AG04449 (cell line): ENCODE measurements at regions of chr7 and their contacts with region 1.

Region 1: DNA sequence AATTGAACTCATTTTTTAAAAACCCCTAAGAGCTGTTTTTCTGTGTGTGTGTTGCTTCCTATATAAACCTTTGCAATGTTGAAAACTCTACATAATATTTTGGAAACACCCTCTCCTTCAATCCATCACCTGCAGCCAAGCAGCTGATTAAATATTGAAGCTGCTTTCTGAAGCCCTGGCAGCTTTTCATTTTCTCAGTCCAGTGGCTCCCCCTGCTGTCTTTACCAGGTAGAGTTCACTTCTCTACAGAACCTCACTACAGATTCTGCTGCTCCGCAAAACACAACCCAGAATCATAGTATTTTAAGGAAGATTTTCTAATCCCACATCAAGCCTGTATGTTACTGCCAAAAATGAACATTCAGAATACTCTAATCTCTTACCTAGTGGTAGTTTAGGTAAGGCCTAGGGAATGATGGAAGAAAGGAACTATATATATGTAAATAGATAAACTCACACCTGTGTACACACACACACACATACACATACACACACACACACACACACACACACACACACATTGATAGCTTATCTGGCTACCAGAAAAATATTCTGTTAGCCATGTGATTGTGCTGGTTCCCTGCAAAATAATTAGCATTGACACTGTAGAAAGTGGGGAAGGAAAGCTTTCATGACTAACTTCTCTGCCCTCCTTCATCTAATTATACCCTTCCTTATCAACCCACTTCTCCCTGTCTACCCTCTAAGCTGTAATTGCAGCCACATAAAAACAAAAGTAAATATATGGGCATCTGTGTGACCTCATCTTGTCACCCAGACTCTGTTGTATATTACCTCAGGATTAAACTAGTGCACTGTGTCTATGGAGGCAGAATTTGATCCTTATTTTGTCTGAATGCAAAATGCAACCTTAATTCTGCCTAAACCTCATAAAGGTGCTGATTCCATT is 229.5 kb upstream of the FZD1 start:
- DNase-seq: no peak
- H3K4me3 ChIP-seq: no peak overlapping the region
- CTCF ChIP-seq: peak; percentile 52

Region 2: GRCh38 chr7:90455163-90456030 is 579.3 kb before region 1 on chr7:
- CTCF ChIA-PET with region 1: interaction called, 10 read pairs
- POLR2A ChIA-PET with region 1: no interaction called
- DNase-seq: no peak
- H3K4me3 ChIP-seq: no peak overlapping the region
- CTCF ChIP-seq: peak; percentile 31

Region 3: GRCh38 chr7:90552521-90552920 is 482.2 kb before region 1 on chr7:
- CTCF ChIA-PET with region 1: interaction called, 81 read pairs
- POLR2A ChIA-PET with region 1: no interaction called
- DNase-seq: no peak
- H3K4me3 ChIP-seq: no peak overlapping the region
- CTCF ChIP-seq: no peak

Region 4: GRCh38 chr7:90595801-90596671 is 438.7 kb before region 1 on chr7 and contains the start of gene CDK14:
- CTCF ChIA-PET with region 1: interaction called, 15 read pairs
- POLR2A ChIA-PET with region 1: no interaction called
- DNase-seq: no peak
- H3K4me3 ChIP-seq: peak within 1 kb of the TSS; percentile 72
- CTCF ChIP-seq: peak; percentile 73

Region 5: GRCh38 chr7:90605055-90605454 is 429.7 kb before region 1 on chr7:
- CTCF ChIA-PET with region 1: interaction called, 13 read pairs
- POLR2A ChIA-PET with region 1: no interaction called
- DNase-seq: no peak
- H3K4me3 ChIP-seq: no peak overlapping the region
- CTCF ChIP-seq: no peak

Region 6: DNA sequence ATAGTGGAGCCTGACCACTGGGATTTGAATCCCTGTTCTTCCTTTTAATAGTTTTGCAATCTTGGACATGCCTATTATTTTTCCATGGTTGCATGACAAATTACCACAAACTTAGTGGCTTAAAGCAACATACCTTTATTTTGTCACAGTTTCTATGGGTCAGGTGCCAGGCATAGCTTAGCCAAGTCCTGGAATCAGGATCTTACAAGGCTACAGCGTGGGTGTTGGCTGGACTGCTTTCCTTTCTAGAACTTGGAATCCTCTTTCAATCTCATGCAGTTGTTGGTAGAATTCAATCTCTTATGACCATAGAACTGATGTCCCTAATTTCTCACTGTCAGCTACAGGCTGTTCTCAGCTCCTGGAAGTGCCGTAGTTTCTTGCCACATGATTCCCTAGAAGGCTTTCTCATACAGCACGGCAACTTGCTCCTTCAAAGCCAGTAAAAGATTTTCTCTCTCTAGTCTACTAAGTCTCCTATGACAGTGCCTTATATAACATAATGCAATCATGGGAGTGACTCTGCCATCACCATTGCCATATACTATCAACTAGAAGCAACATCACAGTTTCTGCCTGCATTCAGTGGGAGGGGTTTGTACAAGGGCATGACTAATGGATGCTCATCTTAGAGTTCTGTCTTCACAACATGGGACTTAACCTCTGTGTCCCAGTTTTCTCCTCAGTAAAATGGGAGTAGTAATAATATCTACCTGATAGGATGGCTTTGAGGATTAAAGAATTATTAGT is 13.9 kb before region 1 on chr7:
- CTCF ChIA-PET with region 1: interaction called, 21 read pairs
- POLR2A ChIA-PET with region 1: no interaction called
- DNase-seq: no peak
- H3K4me3 ChIP-seq: no peak overlapping the region
- CTCF ChIP-seq: no peak

Region 7: GRCh38 chr7:91457208-91457607 is 422.5 kb after region 1 on chr7:
- CTCF ChIA-PET with region 1: no interaction called
- POLR2A ChIA-PET with region 1: no interaction called
- DNase-seq: no peak
- H3K4me3 ChIP-seq: no peak overlapping the region
- CTCF ChIP-seq: no peak